ENCODE measurements at regions of chr14 and their contacts with region 1.

Region 1: DNA sequence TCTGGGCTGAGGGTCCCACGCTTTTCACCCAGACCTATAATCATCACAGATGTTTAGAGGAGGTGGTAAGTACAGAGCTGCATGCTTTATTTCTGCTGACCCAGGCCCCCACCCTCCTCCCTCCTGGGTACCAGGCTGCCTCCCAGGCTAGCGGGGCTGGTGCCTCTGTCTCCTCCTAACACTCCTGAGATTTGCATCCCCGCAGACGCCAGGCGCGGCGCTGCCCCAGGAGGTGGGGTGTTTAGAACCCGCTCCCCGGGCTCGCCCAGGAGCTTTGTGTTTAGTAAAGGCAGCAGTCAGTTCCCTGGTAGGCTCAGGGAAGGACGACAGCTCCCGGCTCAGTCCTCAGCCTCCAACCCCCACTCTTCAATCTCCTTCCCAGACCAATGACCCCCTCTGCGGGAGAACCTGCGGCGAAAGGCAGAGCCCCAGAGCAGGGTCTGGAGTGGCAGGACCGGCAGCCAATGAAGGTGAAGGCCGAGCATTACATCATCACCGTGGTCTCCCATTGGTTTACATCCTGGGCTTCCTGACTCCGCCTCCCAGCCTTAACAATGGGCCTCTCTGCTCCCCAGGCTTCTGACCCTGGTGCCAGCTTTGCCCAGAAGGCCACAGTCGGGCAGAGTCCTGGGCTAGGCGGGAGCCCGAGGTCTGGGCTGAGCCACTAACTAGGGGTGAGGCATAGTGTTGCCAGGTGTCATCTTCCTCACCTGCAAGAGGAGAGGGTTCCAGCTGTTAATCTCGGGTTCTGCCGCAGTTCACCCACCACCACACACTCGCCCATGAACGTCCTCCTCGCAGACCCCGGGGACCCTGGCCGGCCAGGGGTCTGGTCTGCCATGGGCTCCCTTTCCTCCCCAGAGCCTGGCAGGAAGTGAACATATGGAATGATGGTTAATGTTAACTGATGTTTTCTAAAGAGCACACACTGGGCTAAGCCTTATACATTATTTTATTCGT is 57.5 kb downstream of the CALM1 start:
- DNase-seq: peak; percentile 95 to 99 (median 98)
- H3K4me3 ChIP-seq: peak overlapping the region; percentile 17 to 75 (median 55)
- H3K27ac ChIP-seq: peak overlapping the region; percentile 83 to 100 (median 98)
- H3K27me3 ChIP-seq: no peaks in the 10 kb centered on the region
- CTCF ChIP-seq: peak in 41 of 56 donors; percentile 3 to 64 (median 30)

Region 2: DNA sequence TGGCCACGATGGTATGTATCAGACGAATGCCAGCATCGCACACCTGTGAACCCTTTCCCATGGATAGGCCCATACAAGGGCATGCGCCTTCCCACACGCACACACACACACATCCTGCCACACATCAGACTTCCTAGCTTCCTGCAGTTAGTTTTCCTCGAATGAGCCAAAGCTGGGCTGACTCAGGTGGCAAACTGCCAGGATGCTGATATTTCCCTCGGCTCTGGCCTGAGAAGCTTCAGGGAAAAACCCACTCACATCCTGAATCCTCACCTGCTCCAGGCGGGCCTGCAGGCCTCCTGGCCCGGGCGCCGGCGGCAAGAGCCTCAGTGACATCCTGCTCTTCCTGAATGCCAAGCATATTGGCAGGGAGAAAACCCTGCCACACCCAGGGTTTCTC is 35.1 kb before region 1 on chr14:
- intact Hi-C with region 1: no loop called
- DNase-seq: peak in 8 of 10 donors; percentile 48 to 85 (median 74)
- H3K4me3 ChIP-seq: no peak overlapping the region
- H3K27ac ChIP-seq: peak overlapping the region in 28 of 59 donors; percentile 5 to 79 (median 46)
- H3K27me3 ChIP-seq: no peaks in the 10 kb centered on the region
- CTCF ChIP-seq: no peak

Region 3: DNA sequence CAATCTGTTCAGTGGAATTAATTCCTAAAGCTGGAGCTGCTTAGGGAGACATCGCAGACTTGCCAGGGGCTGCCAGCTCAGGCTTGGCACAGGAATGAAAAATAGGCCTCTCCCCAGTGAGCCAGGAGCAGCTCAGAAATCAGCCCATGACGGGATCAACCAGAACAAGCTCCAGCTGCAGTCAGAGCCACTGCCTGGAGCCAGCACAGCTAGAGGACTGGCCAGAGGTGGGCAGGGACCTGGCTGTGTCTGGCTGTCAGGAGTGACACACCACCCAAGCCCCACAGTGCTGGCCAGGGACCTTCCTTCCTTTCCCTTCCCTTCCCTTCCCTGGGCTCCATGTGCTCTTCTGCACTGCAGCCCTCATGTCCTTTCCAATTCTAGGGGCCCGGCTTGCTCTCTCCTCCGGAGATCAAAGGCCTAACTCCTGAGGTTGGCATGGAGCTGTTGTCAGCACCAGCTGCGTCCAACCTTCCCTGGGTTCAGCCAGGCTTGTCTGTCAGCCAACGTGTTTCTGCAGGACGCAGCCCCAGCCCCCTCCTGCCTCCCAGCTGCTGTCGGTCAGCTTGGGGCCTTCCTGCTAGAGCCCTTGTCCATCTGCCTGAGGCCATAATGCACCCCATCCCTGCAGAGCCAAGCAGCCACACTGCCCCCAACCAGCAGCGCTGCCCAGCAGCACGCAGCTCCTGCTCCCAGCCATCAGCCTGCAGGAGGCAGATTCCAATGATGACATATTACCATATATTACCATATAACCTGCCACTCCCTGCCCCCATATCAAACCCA is 91.8 kb after region 1 on chr14:
- intact Hi-C with region 1: loop called (anchors 5 to 10 kb)
- DNase-seq: peak in 9 of 10 donors; percentile 32 to 78 (median 62)
- H3K4me3 ChIP-seq: no peak overlapping the region
- H3K27ac ChIP-seq: peak overlapping the region; percentile 74 to 98 (median 93)
- H3K27me3 ChIP-seq: no peaks in the 10 kb centered on the region
- CTCF ChIP-seq: peak in 14 of 56 donors; percentile 8 to 29 (median 14)

Region 4: GRCh38 chr14:90556012-90556477 is 101.7 kb after region 1 on chr14:
- intact Hi-C with region 1: loop called in 1 of 2 experiments (anchors 10 kb)
- DNase-seq: peak in 6 of 10 donors; percentile 41 to 81 (median 59)
- H3K4me3 ChIP-seq: peak overlapping the region in 51 of 59 donors; percentile 1 to 53 (median 33)
- H3K27ac ChIP-seq: peak overlapping the region; percentile 76 to 99 (median 96)
- H3K27me3 ChIP-seq: no peaks in the 10 kb centered on the region
- CTCF ChIP-seq: no peak

Measured in dorsolateral prefrontal cortex (tissue), 120 donors.